Breast epithelium (tissue), 4 donors: ENCODE measurements at regions of chr7 and their contacts with region 1.

Region 1: DNA sequence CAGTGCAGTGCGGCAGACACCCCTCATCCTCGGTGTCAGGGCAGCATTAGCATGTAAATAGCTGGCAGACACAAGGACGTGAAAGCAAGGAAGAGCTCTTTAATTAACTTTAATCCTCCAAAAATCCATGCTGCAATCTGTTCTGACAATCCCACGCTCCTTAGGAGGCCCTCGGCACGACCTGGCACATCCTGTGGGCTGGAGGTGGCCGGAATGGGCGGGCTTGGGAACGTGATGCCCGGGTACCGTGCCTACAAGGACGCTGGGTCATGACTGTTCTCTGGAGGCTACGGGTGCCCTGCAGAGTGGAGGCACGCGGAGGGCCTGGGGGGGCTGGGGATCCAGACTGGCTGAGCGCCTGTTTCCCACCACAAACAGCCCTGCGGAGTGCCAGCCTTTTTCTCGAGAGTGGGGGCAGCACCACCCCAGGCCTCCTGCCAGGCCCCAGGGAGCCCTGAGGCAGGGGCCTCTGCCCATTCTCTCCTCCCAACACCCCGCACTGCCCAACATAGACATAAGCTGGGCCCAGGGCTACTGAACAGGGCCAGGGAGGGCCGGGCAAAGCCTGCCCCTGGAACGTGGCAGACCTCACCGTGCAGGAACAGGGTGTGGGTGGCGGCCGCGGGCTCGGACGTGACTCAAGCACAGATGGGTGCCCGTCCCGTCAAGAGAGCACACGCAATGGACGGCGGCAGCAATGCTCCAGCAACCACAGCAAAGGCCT is 189.3 kb downstream of the MAD1L1 start:
- DNase-seq: no peak
- H3K4me3 ChIP-seq: no peak overlapping the region
- H3K27ac ChIP-seq: no peak overlapping the region
- H3K4me1 ChIP-seq: no peaks in the 10 kb centered on the region
- H3K27me3 ChIP-seq: no peaks in the 10 kb centered on the region
- CTCF ChIP-seq: no peak
- POLR2A ChIP-seq: no peak

Region 2: GRCh38 chr7:2014391-2015241 is 28.9 kb before region 1 on chr7:
- intact Hi-C with region 1: loop called (anchors 1 kb)
- DNase-seq: peak in 1 of 2 donors; percentile 43
- H3K4me3 ChIP-seq: no peak overlapping the region
- H3K27ac ChIP-seq: no peak overlapping the region
- H3K4me1 ChIP-seq: no peaks in the 10 kb centered on the region
- H3K27me3 ChIP-seq: no peaks in the 10 kb centered on the region
- CTCF ChIP-seq: no peak
- POLR2A ChIP-seq: no peak

Region 3: DNA sequence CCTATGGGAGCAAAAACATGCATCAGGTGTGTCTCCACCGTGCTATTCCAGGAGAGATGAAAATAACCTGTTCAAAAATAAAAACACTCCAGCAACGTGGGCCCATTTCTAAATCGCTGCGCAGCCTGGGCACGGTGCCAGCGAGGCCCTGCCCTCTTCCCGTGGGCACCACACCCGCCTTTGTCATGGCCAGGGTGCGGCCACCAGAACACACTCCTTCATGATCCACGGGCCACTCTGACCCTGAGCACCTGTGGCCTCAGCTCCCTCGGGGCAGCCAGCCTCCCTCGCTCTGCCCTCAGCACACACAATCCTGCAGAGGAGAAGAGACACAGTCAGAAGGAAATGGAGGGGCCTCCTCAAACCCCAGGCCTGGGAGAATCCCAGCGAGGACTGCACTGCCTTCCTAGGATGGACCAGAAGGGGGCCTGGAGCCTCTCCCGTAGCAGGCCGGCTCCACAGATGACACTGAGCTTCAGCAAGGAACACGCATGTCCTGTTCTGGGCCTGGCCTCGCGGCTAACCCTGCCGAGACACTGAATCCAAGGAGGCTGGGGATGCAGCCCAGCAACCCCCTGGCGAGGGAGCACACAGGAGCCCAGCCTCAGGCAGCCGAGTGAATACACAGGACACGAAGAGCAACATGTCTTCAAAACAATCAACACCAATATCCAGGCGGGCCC is 20.2 kb after region 1 on chr7:
- intact Hi-C with region 1: no loop called
- DNase-seq: no peak
- H3K4me3 ChIP-seq: no peak overlapping the region
- H3K27ac ChIP-seq: no peak overlapping the region
- H3K4me1 ChIP-seq: no peaks in the 10 kb centered on the region
- H3K27me3 ChIP-seq: no peaks in the 10 kb centered on the region
- CTCF ChIP-seq: no peak
- POLR2A ChIP-seq: no peak